Endothelial cell of umbilical vein (primary cell): ENCODE measurements at regions of chr18 and their contacts with region 1.

Region 1: DNA sequence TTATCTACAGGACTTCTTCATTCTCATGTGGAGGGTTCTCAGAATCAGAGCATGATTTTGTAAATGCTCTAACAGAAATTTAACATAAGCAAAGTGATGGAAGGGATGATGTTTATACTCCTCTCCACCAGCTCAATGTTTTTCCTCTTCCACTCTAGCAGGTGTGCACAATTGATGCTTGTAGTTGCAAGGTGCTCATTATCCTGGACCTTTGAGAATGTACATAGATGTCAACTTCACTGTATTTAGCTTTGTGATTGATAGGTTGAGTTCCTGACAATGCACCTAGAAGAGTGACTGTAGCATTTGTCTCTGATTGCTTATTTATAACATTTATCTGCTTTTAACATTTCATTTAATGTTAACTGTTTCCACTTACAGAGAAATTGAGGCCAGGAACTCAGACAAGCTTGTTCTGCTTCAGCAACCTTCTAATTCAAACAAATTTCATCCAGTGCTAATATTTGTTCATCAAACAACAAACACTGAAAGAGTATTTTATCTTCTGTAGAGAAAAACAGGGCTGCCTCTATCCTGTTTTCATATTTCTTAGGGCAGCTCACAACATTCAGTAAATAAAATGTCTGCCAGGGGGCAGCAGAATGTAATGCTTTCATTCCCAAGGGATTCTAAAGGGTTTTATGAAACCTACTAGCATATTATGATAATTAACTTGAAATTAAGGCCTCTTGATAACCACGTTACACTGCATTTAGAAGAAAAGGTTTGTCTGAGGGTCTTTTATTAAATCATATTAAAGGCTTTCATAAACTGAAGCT is 127.9 kb upstream of the NOL4 start:
- DNase-seq: peak; percentile 35
- H3K4me3 ChIP-seq: no peak overlapping the region
- H3K27ac ChIP-seq: no peak overlapping the region
- H3K4me1 ChIP-seq: no peaks in the 10 kb centered on the region
- H3K27me3 ChIP-seq: no peaks in the 10 kb centered on the region
- CTCF ChIP-seq: no peak
- POLR2A ChIP-seq: no peak

Region 2: GRCh38 chr18:34590503-34590902 is 237.9 kb after region 1 on chr18:
- CTCF ChIA-PET with region 1: no interaction called
- POLR2A ChIA-PET with region 1: no interaction called
- dilution Hi-C with region 1: no loop called
- intact Hi-C with region 1: no loop called
- DNase-seq: peak; percentile 19
- H3K4me3 ChIP-seq: no peak overlapping the region
- H3K27ac ChIP-seq: no peak overlapping the region
- H3K4me1 ChIP-seq: peaks cover 2% of the 10 kb centered on the region
- H3K27me3 ChIP-seq: no peaks in the 10 kb centered on the region
- CTCF ChIP-seq: no peak
- POLR2A ChIP-seq: no peak

Region 3: GRCh38 chr18:34647251-34647650 is 294.7 kb after region 1 on chr18:
- CTCF ChIA-PET with region 1: interaction called, 17 read pairs
- POLR2A ChIA-PET with region 1: no interaction called
- dilution Hi-C with region 1: no loop called
- intact Hi-C with region 1: no loop called
- DNase-seq: no peak
- H3K4me3 ChIP-seq: no peak overlapping the region
- H3K27ac ChIP-seq: no peak overlapping the region
- H3K4me1 ChIP-seq: no peaks in the 10 kb centered on the region
- H3K27me3 ChIP-seq: no peaks in the 10 kb centered on the region
- CTCF ChIP-seq: no peak
- POLR2A ChIP-seq: no peak